ENCODE measurements at regions of chr2 and their contacts with region 1.

Region 1: GRCh38 chr2:67840460-67841068 is 222.2 kb downstream of the C1D start:
- DNase-seq: peak in 1 of 2 donors; percentile 72
- H3K4me3 ChIP-seq: no peak overlapping the region
- H3K27ac ChIP-seq: no peak overlapping the region
- H3K4me1 ChIP-seq: no peaks in the 10 kb centered on the region
- H3K27me3 ChIP-seq: no peaks in the 10 kb centered on the region
- CTCF ChIP-seq: peak; percentile 67 to 88 (median 77)

Region 2: DNA sequence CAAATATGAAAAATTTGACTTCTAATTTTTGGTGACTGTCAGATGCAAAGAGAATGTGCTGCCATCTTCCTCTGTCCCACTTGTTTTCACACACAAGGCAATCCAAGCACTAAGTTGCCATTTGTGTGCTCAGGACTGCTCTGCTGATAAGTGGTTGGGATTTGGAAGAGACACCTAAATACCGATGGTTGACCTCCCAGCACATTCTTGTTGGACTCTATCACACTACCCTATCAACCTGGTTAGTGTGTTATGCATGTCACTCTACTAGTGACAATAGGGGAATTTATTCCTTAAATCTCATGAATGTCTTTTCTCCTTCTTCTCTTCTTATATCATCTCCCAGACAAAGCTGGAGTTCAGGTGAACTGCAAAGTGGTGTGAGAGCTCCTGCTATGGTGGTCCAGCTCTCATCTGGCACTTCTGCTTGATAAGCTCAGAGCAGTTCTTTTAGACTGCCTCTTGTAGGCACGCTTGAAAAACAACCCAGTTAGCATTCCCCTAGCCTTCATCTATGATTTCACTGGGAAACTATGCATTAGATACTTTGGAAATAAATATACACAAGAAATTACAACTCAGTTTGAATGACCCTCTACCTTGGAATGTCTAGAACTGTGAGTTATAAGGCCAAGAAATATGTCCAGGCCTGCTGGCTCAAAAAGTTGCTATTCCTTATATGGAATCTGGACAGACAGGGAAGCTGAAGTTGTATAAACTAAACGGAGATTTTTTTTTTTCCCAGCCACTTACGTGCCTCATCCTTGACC is 1000.8 kb before region 1 on chr2:
- intact Hi-C with region 1: loop called (anchors 10 kb)
- DNase-seq: peak in 1 of 2 donors; percentile 67
- H3K4me3 ChIP-seq: peak overlapping the region; percentile 14 to 30
- H3K27ac ChIP-seq: peak overlapping the region; percentile 58 to 80
- H3K4me1 ChIP-seq: peaks cover 0 to 6% of the 10 kb centered on the region in 2 donors
- H3K27me3 ChIP-seq: no peaks in the 10 kb centered on the region
- CTCF ChIP-seq: no peak

Region 3: GRCh38 chr2:67322353-67323001 is 518.1 kb before region 1 on chr2:
- intact Hi-C with region 1: loop called (anchors 5 kb)
- DNase-seq: peak in 1 of 2 donors; percentile 77
- H3K4me3 ChIP-seq: peak overlapping the region in 1 of 2 donors; percentile 11
- H3K27ac ChIP-seq: peak overlapping the region; percentile 25 to 44
- H3K4me1 ChIP-seq: peaks cover 0 to 10% of the 10 kb centered on the region in 2 donors
- H3K27me3 ChIP-seq: no peaks in the 10 kb centered on the region
- CTCF ChIP-seq: peak; percentile 40 to 70 (median 61)

Region 4: DNA sequence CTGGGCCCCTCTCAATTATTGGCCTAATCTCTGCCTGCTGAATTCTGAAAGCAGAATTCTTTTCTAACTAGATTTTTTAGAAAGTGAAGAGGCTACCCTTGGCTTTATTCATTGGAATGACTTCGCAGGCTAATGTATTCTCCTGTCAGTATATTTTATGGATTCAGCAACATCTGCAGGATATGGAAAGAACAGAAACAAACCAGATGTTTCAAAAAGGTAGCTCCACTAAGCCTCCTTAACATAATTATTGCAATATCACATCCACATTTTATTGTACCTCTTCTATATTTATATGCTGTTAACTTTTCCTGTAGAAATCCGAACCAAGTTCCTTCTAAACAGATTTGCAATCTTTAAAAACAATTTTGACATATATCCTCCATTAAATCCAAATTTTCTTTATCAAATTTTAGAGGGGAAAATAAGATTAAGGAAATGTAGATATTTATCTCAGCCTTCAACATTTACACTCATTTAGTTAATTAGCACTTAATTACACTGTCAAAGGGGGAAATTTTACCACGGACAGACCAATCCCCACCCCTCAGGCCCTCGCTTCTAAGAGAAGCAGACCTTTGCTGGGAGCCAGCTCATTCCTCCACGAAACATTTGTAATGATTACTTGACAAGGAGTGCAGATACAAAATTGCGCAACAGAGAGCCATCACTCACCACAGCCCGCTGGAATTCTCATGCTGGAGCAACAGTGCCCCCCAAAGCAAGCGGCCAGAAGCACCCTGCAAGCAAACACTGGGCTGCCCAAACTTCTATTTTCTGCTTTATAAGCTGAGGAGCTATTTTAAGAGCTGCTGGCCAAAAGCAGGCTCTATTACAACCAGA is 190.1 kb before region 1 on chr2:
- intact Hi-C with region 1: loop called (anchors 2 kb)
- DNase-seq: peak; percentile 31 to 92
- H3K4me3 ChIP-seq: no peak overlapping the region
- H3K27ac ChIP-seq: peak overlapping the region; percentile 23 to 61
- H3K4me1 ChIP-seq: peaks cover 5 to 23% of the 10 kb centered on the region in 2 donors
- H3K27me3 ChIP-seq: no peaks in the 10 kb centered on the region
- CTCF ChIP-seq: peak; percentile 44 to 73 (median 65)

Region 5: DNA sequence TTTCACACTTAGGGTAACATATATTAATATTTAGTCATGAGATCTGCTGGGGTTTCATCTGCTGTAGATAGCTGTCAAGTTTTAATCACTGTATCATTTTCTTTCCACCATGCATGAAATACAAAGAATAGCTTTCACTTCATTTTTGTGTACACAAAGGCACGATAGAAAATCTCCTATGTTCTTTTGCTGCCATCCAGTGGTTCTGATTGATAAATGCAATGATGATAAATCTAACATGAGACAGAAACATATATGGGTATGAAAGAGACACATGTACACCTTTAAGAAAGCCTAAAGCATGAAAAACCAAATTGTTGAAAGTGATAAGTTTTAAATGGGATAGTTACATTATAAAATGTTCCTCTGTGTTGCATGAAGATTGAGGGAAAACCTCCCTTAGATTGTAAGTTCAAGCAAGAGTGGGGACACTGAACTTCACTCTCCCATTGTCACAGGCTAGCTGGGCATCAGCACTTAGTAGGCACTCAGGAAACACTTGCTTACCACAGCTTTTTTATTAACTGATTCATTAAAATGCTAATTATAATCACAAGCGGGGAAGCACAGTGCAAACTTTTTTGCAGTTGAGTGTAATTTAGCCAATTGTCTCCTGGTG is 191.1 kb after region 1 on chr2:
- intact Hi-C with region 1: loop called (anchors 2 kb)
- DNase-seq: no peak
- H3K4me3 ChIP-seq: no peak overlapping the region
- H3K27ac ChIP-seq: no peak overlapping the region
- H3K4me1 ChIP-seq: peaks cover 0 to 4% of the 10 kb centered on the region in 2 donors
- H3K27me3 ChIP-seq: no peaks in the 10 kb centered on the region
- CTCF ChIP-seq: peak; percentile 56 to 76 (median 74)

Region 6: GRCh38 chr2:68088940-68089339 is 248.4 kb after region 1 on chr2:
- intact Hi-C with region 1: no loop called
- DNase-seq: no peak
- H3K4me3 ChIP-seq: no peak overlapping the region
- H3K27ac ChIP-seq: no peak overlapping the region
- H3K4me1 ChIP-seq: no peaks in the 10 kb centered on the region
- H3K27me3 ChIP-seq: no peaks in the 10 kb centered on the region
- CTCF ChIP-seq: no peak

Measured in ascending aorta (tissue), 2 donors.